Activated CD4-positive, alpha-beta memory T cell treated with anti-CD3 and anti-CD28 coated beads, Interleukin-2, amount 10 ng/mL, durations not matched to agents 7 days and 5 days (primary cell): ENCODE measurements at regions of chr1 and their contacts with region 1.

Region 1: GRCh38 chr1:198651650-198652400 is 13.0 kb downstream of the PTPRC start:
- DNase-seq: no peak
- H3K4me3 Mint-ChIP-seq: peak overlapping the region; percentile 65
- H3K27ac Mint-ChIP-seq: peak overlapping the region; percentile 67
- H3K4me1 Mint-ChIP-seq: peaks cover 78% of the 10 kb centered on the region
- H3K27me3 Mint-ChIP-seq: no peaks in the 10 kb centered on the region

Region 2: GRCh38 chr1:198662821-198663220 is 11.0 kb after region 1 on chr1:
- CTCF ChIA-PET with region 1: interaction called, 7 read pairs
- POLR2A ChIA-PET with region 1: interaction called, 130 read pairs
- DNase-seq: no peak
- H3K4me3 Mint-ChIP-seq: peak overlapping the region; percentile 46
- H3K27ac Mint-ChIP-seq: peak overlapping the region; percentile 37
- H3K4me1 Mint-ChIP-seq: peaks cover 78% of the 10 kb centered on the region
- H3K27me3 Mint-ChIP-seq: no peaks in the 10 kb centered on the region

Region 3: DNA sequence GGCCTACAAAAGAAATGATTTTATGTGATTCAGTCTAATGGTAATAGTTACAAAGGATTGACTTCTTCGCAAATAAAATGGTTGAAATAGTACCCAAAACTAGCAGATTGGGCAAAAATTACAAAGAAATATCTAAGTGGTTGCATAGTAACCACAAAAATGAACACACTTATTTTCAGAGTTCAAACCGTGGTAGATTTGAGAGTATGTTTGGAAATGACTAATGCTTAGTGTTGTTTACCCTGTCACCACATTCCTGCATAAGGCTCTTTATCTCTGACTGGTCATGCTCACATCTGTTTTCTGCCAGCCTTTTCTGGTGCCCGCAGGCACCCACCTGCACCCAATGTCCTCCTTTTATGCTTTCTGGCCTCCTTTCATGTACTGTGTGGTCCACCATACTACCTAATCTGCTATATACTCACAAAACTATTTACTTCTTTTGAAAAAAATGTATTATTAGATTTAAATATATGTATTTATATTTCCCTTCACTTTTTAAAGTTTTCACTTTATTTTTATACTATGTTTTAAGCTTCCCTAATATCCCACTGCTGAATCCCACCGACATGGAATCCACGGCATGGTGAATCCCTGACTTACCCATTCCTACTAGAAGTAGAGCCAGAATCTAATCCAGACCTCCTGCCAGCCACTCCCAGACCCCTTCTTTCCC is 17.3 kb after region 1 on chr1:
- CTCF ChIA-PET with region 1: interaction called, 7 read pairs
- POLR2A ChIA-PET with region 1: interaction called, 130 read pairs
- DNase-seq: peak; percentile 60
- H3K4me3 Mint-ChIP-seq: peak overlapping the region; percentile 41
- H3K27ac Mint-ChIP-seq: peak overlapping the region; percentile 87
- H3K4me1 Mint-ChIP-seq: peaks cover 88% of the 10 kb centered on the region
- H3K27me3 Mint-ChIP-seq: no peaks in the 10 kb centered on the region

Region 4: GRCh38 chr1:198829944-198830343 is 178.1 kb after region 1 on chr1:
- CTCF ChIA-PET with region 1: no interaction called
- POLR2A ChIA-PET with region 1: no interaction called
- DNase-seq: no peak
- H3K4me3 Mint-ChIP-seq: no peak overlapping the region
- H3K27ac Mint-ChIP-seq: no peak overlapping the region
- H3K4me1 Mint-ChIP-seq: no peaks in the 10 kb centered on the region
- H3K27me3 Mint-ChIP-seq: no peaks in the 10 kb centered on the region